Common myeloid progenitor, CD34-positive (primary cell): ENCODE measurements at regions of chr17 and their contacts with region 1.

Region 1: DNA sequence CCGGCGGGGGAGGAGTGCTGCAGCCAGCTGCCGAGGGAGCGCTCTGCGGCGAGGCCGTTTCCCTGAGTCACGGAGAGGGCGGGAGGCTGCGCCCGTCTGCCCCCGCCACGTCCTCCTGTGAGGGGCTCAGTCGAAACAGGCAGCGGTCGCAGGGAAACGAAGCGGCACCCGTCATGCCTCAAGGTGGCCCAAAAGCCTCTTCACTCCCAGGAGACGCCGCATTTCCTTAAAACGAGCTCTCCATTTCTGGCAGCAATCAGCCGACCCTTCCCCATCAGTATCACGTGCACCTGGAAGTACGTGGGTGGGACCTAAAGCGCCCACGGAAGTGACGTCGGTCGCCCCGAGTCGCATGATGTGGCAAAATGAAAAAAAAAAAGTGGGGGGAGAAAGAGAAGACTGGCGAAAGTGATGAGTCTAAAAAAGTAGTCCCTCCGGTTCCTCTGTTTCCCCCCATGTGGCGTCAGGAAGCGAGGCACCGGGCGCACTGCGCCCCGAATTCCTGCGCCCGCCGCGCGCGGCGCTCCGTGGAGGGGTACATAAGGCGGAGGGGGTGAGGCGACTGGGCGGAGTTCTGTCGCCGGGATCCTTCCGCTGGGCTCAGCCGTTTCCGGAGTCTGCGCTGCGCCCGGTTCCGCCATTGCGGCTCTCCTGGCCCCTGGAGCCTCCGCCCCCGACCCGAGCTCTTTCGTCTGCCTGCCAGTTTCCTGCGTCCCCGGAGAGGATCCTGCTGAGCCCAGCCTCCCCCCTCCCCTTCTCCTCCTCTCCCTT is at the start of gene CLTC:
- DNase-seq: peak; percentile 99 to 100 (median 99)
- H3K4me3 ChIP-seq: peak within 1 kb of the TSS; percentile 85 to 98 (median 95)
- H3K27ac ChIP-seq: peak within 1 kb of the TSS; percentile 99 to 100
- H3K4me1 ChIP-seq: peaks cover 12 to 52% (median 30%) of the 10 kb centered on the region in 4 experiments
- H3K27me3 ChIP-seq: no peaks in the 10 kb centered on the region

Region 2: DNA sequence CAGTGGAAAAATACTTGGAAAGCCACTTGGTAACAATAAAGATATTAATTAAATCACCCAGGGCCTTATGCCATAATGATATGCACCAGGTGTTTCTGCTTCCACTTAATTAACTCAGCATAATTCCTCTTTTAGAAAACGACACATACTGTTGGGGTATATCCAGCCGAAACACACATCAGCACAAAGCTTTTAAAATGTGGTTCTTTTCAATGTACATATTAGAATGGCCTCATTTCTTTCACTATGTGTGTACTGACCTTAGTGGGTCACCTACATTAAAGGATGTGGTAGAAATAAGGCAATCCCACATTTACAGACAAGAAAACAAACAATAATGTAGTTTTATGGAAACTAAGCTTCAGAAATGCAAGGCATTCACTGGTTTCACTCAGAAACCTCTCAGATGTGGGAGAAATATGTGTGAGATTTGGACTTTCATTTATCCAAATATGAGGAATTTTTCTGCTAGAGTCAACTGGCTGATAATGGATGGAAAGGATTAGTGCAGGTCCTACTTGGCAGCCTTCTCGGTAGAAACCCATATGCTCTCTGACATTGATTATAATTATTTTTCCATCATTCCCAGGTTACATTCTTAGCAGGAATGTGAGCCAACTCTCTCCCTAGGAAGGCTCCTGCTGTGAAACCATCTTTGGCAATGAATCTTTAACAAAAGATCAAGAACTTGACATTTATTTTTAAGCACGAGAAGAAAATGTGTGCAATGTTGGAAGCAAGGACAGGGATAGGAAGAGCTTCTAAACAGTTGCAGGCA is 120.8 kb before region 1 on chr17:
- CTCF ChIA-PET with region 1: no interaction called
- POLR2A ChIA-PET with region 1: no interaction called
- DNase-seq: no peak
- H3K4me3 ChIP-seq: no peak overlapping the region
- H3K27ac ChIP-seq: no peak overlapping the region
- H3K4me1 ChIP-seq: no peaks in the 10 kb centered on the region
- H3K27me3 ChIP-seq: no peaks in the 10 kb centered on the region

Region 3: DNA sequence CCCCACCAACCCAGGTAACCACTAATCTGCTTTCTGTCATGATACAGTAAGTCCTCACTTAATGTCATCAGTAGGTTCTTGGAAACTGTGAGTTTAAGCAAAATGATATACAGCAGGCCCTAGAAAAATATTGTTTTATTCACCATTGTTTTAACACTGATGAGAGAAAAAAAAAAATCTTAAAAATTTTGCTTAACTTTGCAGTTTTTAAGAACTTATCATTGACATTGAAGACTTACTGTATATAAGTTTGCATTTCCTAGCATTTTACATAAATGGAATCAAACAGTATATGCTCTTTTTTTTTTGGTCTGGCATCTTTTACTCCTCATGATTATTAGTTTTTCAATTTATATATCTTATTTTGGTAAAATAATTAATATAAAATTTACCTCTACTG is 19.3 kb before region 1 on chr17:
- CTCF ChIA-PET with region 1: no interaction called
- POLR2A ChIA-PET with region 1: no interaction called
- DNase-seq: no peak
- H3K4me3 ChIP-seq: no peak overlapping the region
- H3K27ac ChIP-seq: no peak overlapping the region
- H3K4me1 ChIP-seq: no peaks in the 10 kb centered on the region
- H3K27me3 ChIP-seq: no peaks in the 10 kb centered on the region

Region 4: DNA sequence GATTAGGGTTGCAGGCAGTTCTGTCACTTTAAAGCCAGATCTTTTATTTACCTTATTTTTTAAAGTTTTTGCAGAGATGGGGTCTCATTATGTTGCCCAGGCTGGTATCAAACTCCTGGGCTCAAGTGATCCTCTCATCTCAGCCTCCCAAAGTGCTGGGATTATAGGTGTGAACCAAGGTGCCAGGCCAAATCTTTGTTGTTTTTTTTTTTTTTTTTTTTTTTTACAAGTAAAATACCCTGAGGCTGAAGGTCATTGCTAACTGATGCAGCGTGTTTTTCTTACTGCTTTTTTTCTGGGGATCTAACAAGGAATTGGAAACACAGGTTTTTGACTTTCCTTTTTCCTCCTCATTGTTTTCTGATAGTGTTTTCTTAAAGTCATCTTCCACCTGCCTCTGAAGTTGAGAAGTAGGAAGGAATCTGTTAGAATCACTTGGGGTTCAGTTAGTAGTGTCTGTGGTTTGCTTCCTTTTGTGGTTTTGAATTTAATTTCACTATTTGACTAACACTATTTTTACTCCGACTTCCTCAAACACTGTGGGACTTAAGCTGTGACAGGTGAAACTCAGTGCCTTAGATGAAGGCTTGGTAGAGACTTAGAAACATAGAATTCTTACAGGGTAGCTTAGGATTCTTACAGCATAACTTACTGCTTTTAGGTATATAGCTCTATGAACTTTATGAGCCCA is 22.5 kb after region 1 on chr17:
- CTCF ChIA-PET with region 1: interaction called, 3 read pairs
- POLR2A ChIA-PET with region 1: interaction called, 16 read pairs
- DNase-seq: peak; percentile 45 to 88 (median 82)
- H3K4me3 ChIP-seq: peak overlapping the region in 4 of 7 experiments; percentile 1 to 38 (median 12)
- H3K27ac ChIP-seq: no peak overlapping the region
- H3K4me1 ChIP-seq: peaks cover 18 to 38% (median 20%) of the 10 kb centered on the region in 4 experiments
- H3K27me3 ChIP-seq: no peaks in the 10 kb centered on the region